Activated B cell treated with CpG ODN at 0.5 μM for 24 hours (primary cell): ENCODE measurements at regions of chr2 and their contacts with region 1.

Region 1: GRCh38 chr2:214774108-214774507 is 35.4 kb downstream of the BARD1 start:
- DNase-seq: no peak
- ATAC-seq: no peak
- H3K4me3 Mint-ChIP-seq: no peak overlapping the region
- H3K27ac Mint-ChIP-seq: no peak overlapping the region
- H3K4me1 Mint-ChIP-seq: no peaks in the 10 kb centered on the region
- H3K27me3 Mint-ChIP-seq: no peaks in the 10 kb centered on the region
- CTCF ChIP-seq: no peak

Region 2: GRCh38 chr2:214185546-214185945 is 588.6 kb before region 1 on chr2:
- CTCF ChIA-PET with region 1: no interaction called
- POLR2A ChIA-PET with region 1: no interaction called
- intact Hi-C with region 1: no loop called
- DNase-seq: no peak
- ATAC-seq: no peak
- H3K4me3 Mint-ChIP-seq: no peak overlapping the region
- H3K27ac Mint-ChIP-seq: no peak overlapping the region
- H3K4me1 Mint-ChIP-seq: no peaks in the 10 kb centered on the region
- H3K27me3 Mint-ChIP-seq: no peaks in the 10 kb centered on the region
- CTCF ChIP-seq: no peak

Region 3: GRCh38 chr2:214630402-214631045 is 143.6 kb before region 1 on chr2:
- CTCF ChIA-PET with region 1: no interaction called
- POLR2A ChIA-PET with region 1: no interaction called
- intact Hi-C with region 1: no loop called
- DNase-seq: no peak
- ATAC-seq: no peak
- H3K4me3 Mint-ChIP-seq: no peak overlapping the region
- H3K27ac Mint-ChIP-seq: no peak overlapping the region
- H3K4me1 Mint-ChIP-seq: no peaks in the 10 kb centered on the region
- H3K27me3 Mint-ChIP-seq: no peaks in the 10 kb centered on the region
- CTCF ChIP-seq: no peak

Region 4: GRCh38 chr2:214796911-214797310 is 22.8 kb after region 1 on chr2:
- CTCF ChIA-PET with region 1: no interaction called
- POLR2A ChIA-PET with region 1: no interaction called
- intact Hi-C with region 1: loop called (anchors 2 kb)
- DNase-seq: no peak
- ATAC-seq: no peak
- H3K4me3 Mint-ChIP-seq: no peak overlapping the region
- H3K27ac Mint-ChIP-seq: no peak overlapping the region
- H3K4me1 Mint-ChIP-seq: peaks cover 15% of the 10 kb centered on the region
- H3K27me3 Mint-ChIP-seq: no peaks in the 10 kb centered on the region
- CTCF ChIP-seq: no peak

Region 5: GRCh38 chr2:214902286-214902685 is 128.2 kb after region 1 on chr2:
- CTCF ChIA-PET with region 1: no interaction called
- POLR2A ChIA-PET with region 1: no interaction called
- intact Hi-C with region 1: no loop called
- DNase-seq: no peak
- ATAC-seq: no peak
- H3K4me3 Mint-ChIP-seq: no peak overlapping the region
- H3K27ac Mint-ChIP-seq: no peak overlapping the region
- H3K4me1 Mint-ChIP-seq: no peaks in the 10 kb centered on the region
- H3K27me3 Mint-ChIP-seq: no peaks in the 10 kb centered on the region
- CTCF ChIP-seq: no peak

Region 6: DNA sequence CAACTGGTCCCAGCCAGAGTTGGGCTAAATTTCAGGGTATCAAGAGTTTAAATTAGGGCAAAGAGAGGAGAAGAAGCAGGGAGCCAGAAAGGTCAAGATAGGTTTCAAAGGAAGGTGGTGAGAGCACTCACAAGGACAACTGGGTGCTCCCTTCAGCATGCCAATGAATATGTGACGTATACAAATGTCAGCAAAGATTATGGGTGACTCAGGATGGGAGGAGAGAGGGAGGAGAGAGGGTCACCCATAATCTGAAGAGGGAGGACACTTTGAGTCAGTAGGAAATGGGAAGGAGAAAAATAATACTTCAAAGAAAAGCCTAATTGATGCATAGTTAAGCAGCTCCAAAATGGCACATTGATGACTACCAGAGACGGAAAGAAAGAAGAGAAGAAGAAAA is 417.4 kb after region 1 on chr2:
- CTCF ChIA-PET with region 1: no interaction called
- POLR2A ChIA-PET with region 1: no interaction called
- intact Hi-C with region 1: no loop called
- DNase-seq: no peak
- ATAC-seq: no peak
- H3K4me3 Mint-ChIP-seq: no peak overlapping the region
- H3K27ac Mint-ChIP-seq: no peak overlapping the region
- H3K4me1 Mint-ChIP-seq: no peaks in the 10 kb centered on the region
- H3K27me3 Mint-ChIP-seq: no peaks in the 10 kb centered on the region
- CTCF ChIP-seq: no peak